ENCODE measurements at regions of chr20 and their contacts with region 1.

Region 1: DNA sequence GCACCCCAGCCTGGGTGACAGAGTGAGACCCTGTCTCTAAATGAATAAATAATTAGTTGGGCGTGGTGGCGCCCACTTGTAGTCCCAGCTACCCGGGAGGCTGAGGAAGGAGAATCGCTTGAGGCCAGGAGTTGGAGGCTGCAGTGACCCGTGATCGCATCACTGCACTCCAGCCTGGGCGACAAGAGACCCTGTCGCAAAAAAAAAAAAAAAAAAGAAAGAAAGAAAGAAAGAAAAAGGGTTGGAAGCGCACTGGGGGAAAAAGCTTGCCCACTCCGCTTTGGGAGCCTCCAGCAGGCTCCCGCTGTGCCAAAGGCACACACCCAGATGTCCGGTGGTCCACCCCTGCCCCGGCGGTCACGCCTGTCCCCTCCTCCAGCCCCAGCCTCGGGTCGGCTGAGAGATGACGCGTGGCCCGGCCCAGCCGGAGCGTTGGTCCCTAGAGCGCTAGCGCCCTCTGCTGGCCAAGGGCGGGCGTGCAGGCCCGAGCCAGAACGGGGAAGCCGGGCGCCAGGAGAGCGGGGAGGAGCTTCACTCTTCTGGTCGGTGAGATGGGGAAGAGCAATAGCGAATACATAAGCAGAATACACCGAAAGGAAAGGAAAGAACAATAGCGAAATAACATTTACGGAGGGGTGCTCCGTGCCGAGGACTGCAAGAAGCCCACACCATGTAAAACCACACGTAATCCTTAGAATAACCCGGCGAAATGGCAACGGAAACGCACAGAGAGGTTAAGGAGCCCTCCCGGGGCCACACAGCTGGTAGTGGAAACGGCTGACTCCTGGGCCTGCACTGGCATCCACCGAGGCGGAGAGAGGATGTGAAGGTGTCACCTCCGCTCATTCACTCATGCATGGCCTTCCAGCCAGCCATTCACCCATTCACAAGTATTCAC is 41.7 kb downstream of the UBE2V1 start:
- DNase-seq: no peak
- H3K4me3 ChIP-seq: peak overlapping the region; percentile 59
- CTCF ChIP-seq: peak; percentile 98

Region 2: DNA sequence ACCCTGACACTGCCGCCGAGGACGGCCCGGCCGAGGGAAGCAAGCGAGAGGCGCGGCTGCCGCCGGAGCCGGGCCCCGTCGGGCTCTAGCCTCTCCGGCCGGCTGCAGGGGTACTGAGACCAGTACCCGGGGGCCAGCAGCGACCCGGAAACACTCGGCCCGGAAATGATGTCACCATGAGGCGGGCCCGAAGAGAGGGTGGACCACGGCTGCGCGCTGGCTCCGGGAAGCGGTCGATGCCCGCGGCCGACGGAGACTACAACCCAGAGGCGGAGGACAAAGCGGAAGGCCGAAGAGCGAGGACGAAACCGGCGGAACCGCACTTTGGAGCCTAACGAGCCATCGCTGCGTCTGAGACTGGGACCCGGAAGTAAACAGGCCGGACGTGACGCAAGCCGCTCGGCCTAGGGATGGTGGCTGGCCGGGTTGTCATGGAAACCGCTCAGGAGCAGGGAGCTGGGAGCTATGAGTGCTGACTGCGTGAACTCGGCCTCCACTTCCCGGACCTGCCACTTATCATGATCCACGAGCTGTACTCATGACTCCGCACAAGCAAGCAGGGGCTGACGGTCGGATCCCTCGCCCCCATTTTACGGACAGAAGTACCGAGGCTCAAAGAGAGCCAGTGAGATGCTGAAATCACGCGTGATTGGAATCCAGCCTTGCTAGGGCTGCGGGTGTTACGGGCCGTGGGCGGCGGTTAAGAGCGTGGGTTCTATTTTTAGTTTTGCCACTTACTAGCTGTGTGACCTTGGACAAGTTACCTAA is 155.7 kb before region 1 on chr20 and contains the start of gene SPATA2:
- CTCF ChIA-PET with region 1: interaction called, 11 read pairs
- POLR2A ChIA-PET with region 1: no interaction called
- DNase-seq: peak; percentile 60
- H3K4me3 ChIP-seq: peak within 1 kb of the TSS; percentile 96
- CTCF ChIP-seq: no peak

Region 3: DNA sequence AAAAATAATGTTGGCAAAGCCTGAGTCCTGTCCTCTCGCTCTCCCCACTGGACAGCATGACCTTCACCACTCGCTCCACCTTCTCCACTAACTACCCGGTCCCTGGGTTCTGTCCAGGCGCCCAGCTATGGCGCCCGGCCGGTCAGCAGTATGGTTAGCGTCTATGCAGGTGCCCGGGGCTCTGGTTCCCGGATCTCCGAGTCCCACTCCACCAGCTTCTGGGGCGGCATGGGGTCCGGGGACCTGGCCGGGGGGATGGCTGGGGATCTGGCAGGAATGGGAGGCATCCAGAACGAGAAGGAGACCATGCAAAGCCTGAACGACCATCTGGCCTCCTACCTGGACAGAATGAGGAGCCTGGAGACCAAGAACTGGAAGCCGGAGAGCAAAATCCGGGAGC is 114.6 kb before region 1 on chr20:
- CTCF ChIA-PET with region 1: interaction called, 25 read pairs
- POLR2A ChIA-PET with region 1: no interaction called
- DNase-seq: no peak
- H3K4me3 ChIP-seq: no peak overlapping the region
- CTCF ChIP-seq: no peak

Region 4: GRCh38 chr20:49973995-49974394 is 97.2 kb before region 1 on chr20:
- CTCF ChIA-PET with region 1: interaction called, 984 read pairs
- POLR2A ChIA-PET with region 1: interaction called, 8 read pairs
- DNase-seq: no peak
- H3K4me3 ChIP-seq: no peak overlapping the region
- CTCF ChIP-seq: no peak

Region 5: GRCh38 chr20:50085452-50086365 is 14.5 kb after region 1 on chr20:
- CTCF ChIA-PET with region 1: interaction called, 157 read pairs
- POLR2A ChIA-PET with region 1: no interaction called
- DNase-seq: no peak
- H3K4me3 ChIP-seq: no peak overlapping the region
- CTCF ChIP-seq: peak; percentile 65

Region 6: DNA sequence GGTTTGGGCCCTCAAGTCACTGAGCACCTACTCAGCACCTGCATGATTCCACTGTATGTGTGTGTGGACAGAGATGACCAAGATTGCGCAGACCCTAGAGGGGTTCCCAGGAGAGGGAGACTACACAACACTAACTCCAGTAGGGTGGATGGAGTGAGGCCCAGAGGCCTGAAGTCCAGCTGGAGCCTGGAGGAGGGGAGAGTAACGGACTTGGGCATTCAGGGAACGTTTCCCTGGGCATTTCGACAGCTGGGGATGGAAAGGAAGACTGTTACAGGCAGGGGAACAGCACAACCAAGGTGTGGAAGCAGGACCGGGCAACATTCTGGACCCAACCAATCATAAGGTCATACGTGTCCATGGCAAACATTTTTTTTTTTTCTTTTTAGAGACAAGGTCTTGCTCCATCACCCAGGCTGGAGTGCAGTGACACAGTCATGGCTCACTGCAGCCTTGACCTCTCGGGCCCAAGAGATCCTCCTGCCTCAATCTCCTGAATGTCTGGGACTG is 108.3 kb after region 1 on chr20:
- CTCF ChIA-PET with region 1: interaction called, 11 read pairs
- POLR2A ChIA-PET with region 1: no interaction called
- DNase-seq: no peak
- H3K4me3 ChIP-seq: no peak overlapping the region
- CTCF ChIP-seq: no peak

Measured in AG04449 (cell line).